ENCODE measurements at regions of chr9 and their contacts with region 1.

Region 1: GRCh38 chr9:134449221-134449894 is 123.1 kb downstream of the RXRA start:
- DNase-seq: peak; percentile 65
- ATAC-seq: peak; percentile 100
- H3K4me3 Mint-ChIP-seq: no peak overlapping the region
- H3K27ac Mint-ChIP-seq: no peak overlapping the region
- H3K4me1 Mint-ChIP-seq: peaks cover 13% of the 10 kb centered on the region
- H3K27me3 Mint-ChIP-seq: no peaks in the 10 kb centered on the region
- CTCF ChIP-seq: no peak

Region 2: DNA sequence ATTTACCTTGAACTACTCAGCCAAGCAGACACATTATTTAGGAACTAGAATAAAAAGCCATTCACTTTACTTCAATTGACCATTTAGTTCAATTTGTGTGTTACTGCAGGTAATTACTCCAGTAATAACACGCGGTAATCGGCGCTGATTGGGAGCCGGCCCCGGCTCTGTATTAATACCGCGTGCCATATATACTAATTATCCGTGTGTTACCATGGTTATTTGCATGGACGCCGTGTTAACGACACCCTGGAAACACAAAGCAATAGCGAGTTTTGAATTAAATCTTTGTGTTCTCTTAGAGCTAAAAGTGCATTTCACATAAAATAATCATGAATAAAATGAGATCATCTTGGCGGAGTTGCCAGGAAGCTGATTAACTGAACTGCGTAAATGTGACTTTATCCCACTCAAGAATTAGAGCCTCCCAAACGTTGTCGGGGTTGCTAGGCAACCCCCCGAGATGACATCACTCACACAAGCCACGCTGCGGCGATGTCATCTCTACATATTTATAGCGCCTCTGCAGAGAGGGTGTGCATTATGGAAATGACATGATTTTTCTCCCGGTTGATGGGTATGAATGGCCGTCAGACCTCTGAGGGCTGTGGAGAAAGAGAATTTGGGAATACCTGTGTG is 243.6 kb before region 1 on chr9:
- CTCF ChIA-PET with region 1: no interaction called
- POLR2A ChIA-PET with region 1: no interaction called
- intact Hi-C with region 1: no loop called
- DNase-seq: no peak
- ATAC-seq: no peak
- H3K4me3 Mint-ChIP-seq: no peak overlapping the region
- H3K27ac Mint-ChIP-seq: no peak overlapping the region
- H3K4me1 Mint-ChIP-seq: peaks cover 5% of the 10 kb centered on the region
- H3K27me3 Mint-ChIP-seq: peaks cover 3% of the 10 kb centered on the region
- CTCF ChIP-seq: no peak

Region 3: GRCh38 chr9:134344068-134344799 is 105.1 kb before region 1 on chr9:
- CTCF ChIA-PET with region 1: no interaction called
- POLR2A ChIA-PET with region 1: no interaction called
- intact Hi-C with region 1: no loop called
- DNase-seq: no peak
- ATAC-seq: no peak
- H3K4me3 Mint-ChIP-seq: peak overlapping the region; percentile 11
- H3K27ac Mint-ChIP-seq: no peak overlapping the region
- H3K4me1 Mint-ChIP-seq: peaks cover 31% of the 10 kb centered on the region
- H3K27me3 Mint-ChIP-seq: no peaks in the 10 kb centered on the region
- CTCF ChIP-seq: no peak

Region 4: GRCh38 chr9:134660407-134660806 is 211.0 kb after region 1 on chr9:
- CTCF ChIA-PET with region 1: no interaction called
- POLR2A ChIA-PET with region 1: no interaction called
- intact Hi-C with region 1: no loop called
- DNase-seq: no peak
- ATAC-seq: no peak
- H3K4me3 Mint-ChIP-seq: no peak overlapping the region
- H3K27ac Mint-ChIP-seq: no peak overlapping the region
- H3K4me1 Mint-ChIP-seq: no peaks in the 10 kb centered on the region
- H3K27me3 Mint-ChIP-seq: no peaks in the 10 kb centered on the region
- CTCF ChIP-seq: no peak

Region 5: GRCh38 chr9:134818000-134818568 is 368.7 kb after region 1 on chr9:
- CTCF ChIA-PET with region 1: no interaction called
- POLR2A ChIA-PET with region 1: no interaction called
- intact Hi-C with region 1: no loop called
- DNase-seq: no peak
- ATAC-seq: no peak
- H3K4me3 Mint-ChIP-seq: no peak overlapping the region
- H3K27ac Mint-ChIP-seq: no peak overlapping the region
- H3K4me1 Mint-ChIP-seq: no peaks in the 10 kb centered on the region
- H3K27me3 Mint-ChIP-seq: no peaks in the 10 kb centered on the region
- CTCF ChIP-seq: no peak

Region 6: DNA sequence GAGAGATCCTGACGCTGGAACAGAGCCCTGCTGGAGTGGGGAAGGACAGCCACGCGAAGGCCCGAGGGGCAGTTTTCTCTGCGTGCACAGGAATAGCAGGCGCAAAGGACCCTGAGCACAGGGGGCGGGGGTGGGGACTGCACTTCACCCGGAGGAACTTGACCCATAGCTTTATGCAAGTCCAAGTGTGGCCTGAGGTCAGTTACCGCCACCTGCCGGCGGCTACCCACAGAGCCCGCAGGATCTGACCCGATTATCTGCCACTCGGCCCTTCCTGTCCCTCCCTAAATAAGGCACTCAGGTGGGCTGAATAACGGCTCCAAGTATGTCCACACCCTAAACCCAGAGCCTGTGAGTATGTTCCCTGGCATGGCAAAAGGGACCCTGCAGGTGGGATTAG is 533.7 kb after region 1 on chr9:
- CTCF ChIA-PET with region 1: interaction called, 7 read pairs
- POLR2A ChIA-PET with region 1: no interaction called
- intact Hi-C with region 1: loop called (anchors 2 kb)
- DNase-seq: no peak
- ATAC-seq: no peak
- H3K4me3 Mint-ChIP-seq: no peak overlapping the region
- H3K27ac Mint-ChIP-seq: no peak overlapping the region
- H3K4me1 Mint-ChIP-seq: no peaks in the 10 kb centered on the region
- H3K27me3 Mint-ChIP-seq: peaks cover 7% of the 10 kb centered on the region
- CTCF ChIP-seq: no peak

Measured in activated B cell treated with CpG ODN at 0.5 μM for 24 hours (primary cell).